ENCODE measurements at regions of chr12 and their contacts with region 1.

Region 1: DNA sequence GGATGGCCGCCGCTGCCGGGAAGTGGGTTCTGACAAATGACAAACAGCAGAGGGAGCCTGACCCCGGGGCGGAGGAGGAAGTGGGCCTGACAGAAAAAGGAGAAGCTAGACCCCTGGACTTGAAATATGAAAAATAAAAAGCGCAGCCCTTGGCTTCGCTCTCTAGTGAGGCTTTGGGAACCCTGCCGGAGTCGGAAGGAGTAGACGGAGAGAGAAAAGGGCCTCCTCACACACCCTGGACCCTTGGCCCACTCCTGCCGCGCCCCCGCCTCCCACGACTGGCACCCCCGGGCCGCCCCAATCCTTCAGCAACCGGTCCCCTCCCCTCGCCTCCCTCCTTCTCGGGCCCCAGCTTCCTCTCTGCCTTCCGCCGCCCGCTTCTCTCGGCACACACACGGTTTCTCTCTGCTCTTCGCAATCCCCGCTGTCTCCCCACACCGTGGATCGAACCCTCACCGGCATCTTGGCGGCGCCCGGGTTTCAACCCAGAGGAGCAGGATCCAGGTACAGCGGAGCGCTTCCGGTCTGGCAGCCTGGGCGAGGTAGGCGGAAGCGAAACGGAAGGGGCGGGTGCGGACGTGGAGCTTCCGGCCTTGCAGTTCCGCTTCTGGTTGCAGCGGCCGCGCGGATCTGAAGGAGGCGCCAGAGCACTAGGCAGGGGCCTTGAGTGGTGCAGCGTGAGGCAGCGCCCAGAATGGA is at the start of gene ARPC3:
- DNase-seq: peak; percentile 94 to 95
- ATAC-seq: peak; percentile 98 to 100 (median 99)
- H3K4me3 ChIP-seq: peak within 1 kb of the TSS; percentile 61 to 95 (median 81)
- H3K27ac ChIP-seq: peak within 1 kb of the TSS; percentile 80 to 99 (median 94)
- H3K4me1 ChIP-seq: peaks cover 0 to 49% (median 22%) of the 10 kb centered on the region in 9 donors
- H3K27me3 ChIP-seq: no peaks in the 10 kb centered on the region
- CTCF ChIP-seq: peak; percentile 69 to 97 (median 88)
- total RNA-seq, gene ARPC3: 71.9 to 168 (median 82.6) TPM

Region 2: GRCh38 chr12:110245369-110245772 is 204.6 kb before region 1 on chr12:
- intact Hi-C with region 1: no loop called
- DNase-seq: peak in 1 of 2 donors; percentile 67
- ATAC-seq: peak in 3 of 8 donors; percentile 14 to 68 (median 30)
- H3K4me3 ChIP-seq: no peak overlapping the region
- H3K27ac ChIP-seq: peak overlapping the region; percentile 28 to 94 (median 88)
- H3K4me1 ChIP-seq: peaks cover 19 to 63% (median 39%) of the 10 kb centered on the region in 9 donors
- H3K27me3 ChIP-seq: no peaks in the 10 kb centered on the region
- CTCF ChIP-seq: peak in 6 of 9 donors; percentile 15 to 56 (median 30)

Region 3: GRCh38 chr12:110501752-110502738 is 52.1 kb after region 1 on chr12 and contains the starts of genes RAD9B and VPS29:
- intact Hi-C with region 1: loop called in 1 of 10 experiments (anchors 2 kb)
- DNase-seq: peak; percentile 98 to 99
- ATAC-seq: peak; percentile 97 to 100 (median 99)
- H3K4me3 ChIP-seq: peak within 1 kb of the TSS; percentile 70 to 98 (median 85)
- H3K27ac ChIP-seq: peak within 1 kb of the TSS; percentile 59 to 95 (median 91)
- H3K4me1 ChIP-seq: peaks cover 0 to 40% (median 35%) of the 10 kb centered on the region in 9 donors
- H3K27me3 ChIP-seq: no peaks in the 10 kb centered on the region
- CTCF ChIP-seq: no peak
- total RNA-seq, gene RAD9B: 0.23 to 1.6 (median 0.95) TPM
- total RNA-seq, gene VPS29: 83.7 to 117 (median 91.5) TPM

Region 4: DNA sequence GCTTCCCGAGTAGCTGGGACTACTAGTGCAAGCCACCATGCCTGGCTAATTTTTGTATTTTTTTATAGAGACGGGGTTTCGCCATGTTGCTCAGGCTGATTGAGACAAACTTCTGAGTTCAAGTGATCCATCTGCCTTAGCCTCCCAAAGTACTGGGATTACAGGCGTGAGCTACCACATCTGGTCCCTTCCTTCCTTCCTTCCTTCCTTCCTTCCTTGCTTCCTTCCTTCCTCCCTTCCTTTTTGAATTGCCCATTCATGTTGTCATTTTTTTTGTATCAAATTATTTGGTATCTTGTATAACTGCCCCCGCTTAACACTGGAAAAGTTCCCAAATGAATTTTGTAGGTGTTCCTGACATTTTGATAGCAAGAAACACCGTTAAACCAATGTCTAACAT is 63.9 kb after region 1 on chr12:
- intact Hi-C with region 1: loop called in 1 of 10 experiments (anchors 10 kb)
- DNase-seq: no peak
- ATAC-seq: no peak
- H3K4me3 ChIP-seq: no peak overlapping the region
- H3K27ac ChIP-seq: no peak overlapping the region
- H3K4me1 ChIP-seq: peaks cover 0 to 5% (median 0%) of the 10 kb centered on the region in 9 donors
- H3K27me3 ChIP-seq: no peaks in the 10 kb centered on the region
- CTCF ChIP-seq: no peak

Region 5: GRCh38 chr12:110590806-110591326 is 140.9 kb after region 1 on chr12:
- intact Hi-C with region 1: no loop called
- DNase-seq: no peak
- ATAC-seq: peak in 7 of 8 donors; percentile 62 to 84 (median 68)
- H3K4me3 ChIP-seq: no peak overlapping the region
- H3K27ac ChIP-seq: peak overlapping the region in 9 of 10 donors; percentile 31 to 91 (median 68)
- H3K4me1 ChIP-seq: peaks cover 0 to 37% (median 14%) of the 10 kb centered on the region in 9 donors
- H3K27me3 ChIP-seq: no peaks in the 10 kb centered on the region
- CTCF ChIP-seq: no peak

Region 6: DNA sequence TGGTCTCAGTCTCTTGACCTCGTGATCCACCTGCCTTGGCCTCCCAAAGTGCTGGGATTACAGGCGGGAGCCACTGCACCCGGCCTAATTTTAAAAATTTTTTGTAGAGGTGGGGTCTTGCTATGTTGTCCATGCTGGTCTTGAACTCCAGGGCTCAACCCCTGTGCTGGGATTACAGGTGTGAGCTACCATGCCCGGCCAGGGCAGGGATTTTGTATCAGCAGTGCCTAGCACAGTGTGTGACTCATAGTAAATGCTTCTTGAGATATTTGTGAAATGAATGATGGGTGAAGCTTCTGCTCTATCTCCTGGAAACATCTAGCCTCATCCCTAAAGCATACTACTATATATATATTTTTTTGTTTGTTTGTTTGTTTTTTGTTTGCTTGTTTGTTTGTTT is 433.3 kb after region 1 on chr12:
- intact Hi-C with region 1: loop called in 4 of 10 experiments (anchors 1 to 10 kb)
- DNase-seq: no peak
- ATAC-seq: no peak
- H3K4me3 ChIP-seq: no peak overlapping the region
- H3K27ac ChIP-seq: no peak overlapping the region
- H3K4me1 ChIP-seq: peaks cover 0 to 16% (median 7%) of the 10 kb centered on the region in 9 donors
- H3K27me3 ChIP-seq: no peaks in the 10 kb centered on the region
- CTCF ChIP-seq: no peak